SK-N-SH (cell line): ENCODE measurements at regions of chr12 and their contacts with region 1.

Region 1: DNA sequence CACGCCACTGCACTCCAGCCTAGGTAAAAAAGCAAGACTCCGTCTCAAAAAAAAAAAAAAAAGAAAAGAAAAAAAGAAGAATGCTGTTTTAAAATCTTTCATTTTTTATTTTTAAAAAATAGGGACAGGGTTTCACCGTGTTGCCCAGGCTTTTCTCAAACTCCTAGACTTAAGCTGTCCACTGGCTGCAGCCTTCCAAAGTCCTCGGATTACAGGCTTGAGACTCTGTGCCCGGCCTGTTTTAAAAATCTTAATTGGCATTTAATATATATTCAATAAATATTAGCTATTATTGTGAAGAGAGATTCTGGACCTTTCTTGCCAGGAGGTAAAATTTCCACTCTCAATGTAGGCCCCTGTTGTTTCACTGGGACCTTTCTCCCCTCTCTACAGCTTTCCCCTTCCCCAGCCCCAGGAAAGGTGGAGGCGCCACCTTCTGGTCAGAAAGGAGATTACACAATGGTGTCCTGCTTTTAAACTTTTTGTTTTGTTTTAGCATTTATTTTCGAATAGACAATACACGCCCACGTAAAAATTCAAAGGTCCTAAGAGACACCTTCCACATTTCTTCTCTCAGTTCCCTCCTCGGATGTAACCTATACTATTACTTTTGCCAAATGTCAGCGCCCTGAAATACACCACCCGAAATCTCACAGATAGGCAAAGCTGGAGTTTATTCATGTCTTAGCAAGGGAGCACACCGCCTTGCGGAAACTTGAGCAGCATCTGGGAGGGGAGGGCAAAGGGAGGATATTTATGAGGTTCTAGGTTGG is 23.8 kb upstream of the PHC1 start:
- DNase-seq: peak; percentile 76
- H3K4me3 ChIP-seq: peak overlapping the region; percentile 50 to 67
- H3K27ac ChIP-seq: no peak overlapping the region
- H3K4me1 ChIP-seq: no peaks in the 10 kb centered on the region
- H3K27me3 ChIP-seq: no peaks in the 10 kb centered on the region
- CTCF ChIP-seq: peak; percentile 93
- EP300 ChIP-seq: no peak
- RAD21 ChIP-seq: peak; percentile 80

Region 2: GRCh38 chr12:7832059-7832696 is 1058.3 kb before region 1 on chr12:
- CTCF ChIA-PET with region 1: no interaction called
- POLR2A ChIA-PET with region 1: no interaction called
- DNase-seq: peak; percentile 49
- H3K4me3 ChIP-seq: no peak overlapping the region
- H3K27ac ChIP-seq: no peak overlapping the region
- H3K4me1 ChIP-seq: no peaks in the 10 kb centered on the region
- H3K27me3 ChIP-seq: peaks cover 45% of the 10 kb centered on the region
- CTCF ChIP-seq: peak; percentile 74
- EP300 ChIP-seq: no peak
- RAD21 ChIP-seq: peak; percentile 28

Region 3: GRCh38 chr12:8662593-8662992 is 227.9 kb before region 1 on chr12 and contains the start of gene MFAP5:
- CTCF ChIA-PET with region 1: interaction called, 22 read pairs
- POLR2A ChIA-PET with region 1: no interaction called
- DNase-seq: no peak
- H3K4me3 ChIP-seq: no peak within 1 kb of the TSS
- H3K27ac ChIP-seq: no peak within 1 kb of the TSS; a peak in 1 of 4 replicates
- H3K4me1 ChIP-seq: no peaks in the 10 kb centered on the region
- H3K27me3 ChIP-seq: no peaks in the 10 kb centered on the region; the same call in 1 of the 2 replicates
- CTCF ChIP-seq: no peak
- EP300 ChIP-seq: no peak
- RAD21 ChIP-seq: no peak
- polyA plus RNA-seq, gene MFAP5: 19.1 and 34.8 TPM in 2 replicates

Region 4: DNA sequence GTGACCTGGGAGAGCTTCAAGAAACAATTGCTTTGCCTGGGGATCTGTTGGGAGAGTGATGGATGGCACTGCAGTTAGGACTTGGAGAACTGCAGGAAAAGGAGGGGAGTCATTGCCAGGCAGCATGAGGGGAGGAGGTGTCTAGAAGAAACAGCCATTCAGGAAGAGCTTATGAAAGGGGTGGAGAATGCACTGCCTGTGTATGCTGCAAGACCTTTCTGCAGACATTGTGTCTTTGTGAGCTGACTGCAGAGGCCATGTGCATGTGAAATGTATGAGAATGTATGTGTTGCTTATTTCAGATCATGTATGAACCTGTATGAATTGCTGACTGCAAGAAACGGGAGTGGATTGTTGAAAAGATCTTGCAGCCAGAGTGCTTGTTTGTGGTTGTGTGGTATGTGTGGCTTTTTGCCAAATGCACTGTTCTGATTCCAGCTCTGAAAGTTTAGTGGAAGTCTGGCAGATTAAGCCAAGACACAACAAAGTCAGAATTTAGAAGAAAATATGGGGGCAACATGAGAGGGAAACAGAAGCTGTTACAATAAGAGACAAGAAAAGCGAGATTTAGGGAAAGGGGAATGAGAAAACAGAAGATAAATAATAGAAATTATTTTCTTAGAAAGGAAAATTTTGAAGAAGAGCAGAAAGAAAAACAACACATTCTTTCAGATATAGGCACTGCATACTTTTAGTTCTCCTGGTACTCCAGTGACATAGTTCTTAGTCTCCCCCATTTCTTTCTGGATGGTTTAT is 202.5 kb before region 1 on chr12:
- CTCF ChIA-PET with region 1: interaction called, 48 read pairs
- POLR2A ChIA-PET with region 1: no interaction called
- DNase-seq: peak; percentile 77
- H3K4me3 ChIP-seq: peak overlapping the region; percentile 15 to 23; a peak in 3 of 4 replicates
- H3K27ac ChIP-seq: peak overlapping the region; percentile 40 to 82; a peak in 3 of 4 replicates
- H3K4me1 ChIP-seq: peaks cover 6 to 14% of the 10 kb centered on the region in 2 experiments; a peak in 3 of 4 replicates
- H3K27me3 ChIP-seq: no peaks in the 10 kb centered on the region
- CTCF ChIP-seq: no peak
- EP300 ChIP-seq: 0 out of 4 replicates have a peak, but pooled peaks of 1 of the 2 experiments have one; percentile 18
- RAD21 ChIP-seq: no peak

Region 5: DNA sequence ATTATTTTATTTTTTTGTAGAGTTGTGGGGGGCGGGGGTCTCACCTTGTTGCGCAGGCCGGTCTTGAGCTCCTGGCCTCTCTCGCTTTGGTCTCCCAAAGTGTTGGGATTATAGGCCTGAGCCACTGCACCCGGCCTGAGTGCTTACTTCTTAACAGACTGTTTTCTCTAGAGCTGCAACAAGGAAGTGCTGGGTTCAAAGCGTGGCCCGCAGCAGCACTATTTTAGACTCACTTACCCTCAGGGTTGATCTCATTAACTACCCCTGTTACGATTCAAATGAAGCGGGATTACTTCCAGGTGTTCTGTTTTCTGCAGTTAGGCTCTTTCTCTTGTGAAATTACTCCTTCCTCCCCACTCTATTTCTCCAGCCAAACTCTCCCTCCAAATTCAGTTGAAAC is 59.4 kb before region 1 on chr12:
- CTCF ChIA-PET with region 1: interaction called, 33 read pairs
- POLR2A ChIA-PET with region 1: no interaction called
- DNase-seq: no peak
- H3K4me3 ChIP-seq: no peak overlapping the region
- H3K27ac ChIP-seq: no peak overlapping the region
- H3K4me1 ChIP-seq: no peaks in the 10 kb centered on the region
- H3K27me3 ChIP-seq: no peaks in the 10 kb centered on the region; the same call in 1 of the 2 replicates
- CTCF ChIP-seq: no peak
- EP300 ChIP-seq: no peak
- RAD21 ChIP-seq: no peak

Region 6: DNA sequence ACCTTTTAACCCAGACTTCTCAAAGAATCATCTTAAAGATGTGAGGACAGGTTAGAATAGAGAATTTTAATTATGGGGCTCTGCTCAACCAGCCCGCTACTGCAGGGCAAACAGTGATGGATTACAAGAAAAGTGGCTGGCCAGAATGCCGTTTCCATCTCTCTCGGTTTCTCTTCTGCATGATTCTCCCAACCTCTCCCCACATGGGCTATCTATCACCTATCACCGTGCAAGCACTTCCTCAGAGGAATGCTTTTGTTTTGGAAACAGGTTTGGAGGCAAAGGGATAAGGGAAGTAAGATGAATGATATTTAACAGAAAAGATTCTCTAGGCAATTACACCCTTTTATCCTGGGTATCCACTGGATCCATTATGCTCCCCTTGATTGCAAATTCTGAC is 13.6 kb before region 1 on chr12:
- CTCF ChIA-PET with region 1: interaction called, 29 read pairs
- POLR2A ChIA-PET with region 1: no interaction called
- DNase-seq: no peak
- H3K4me3 ChIP-seq: no peak overlapping the region
- H3K27ac ChIP-seq: no peak overlapping the region
- H3K4me1 ChIP-seq: no peaks in the 10 kb centered on the region; a peak in 1 of 4 replicates
- H3K27me3 ChIP-seq: no peaks in the 10 kb centered on the region; the same call in 1 of the 2 replicates
- CTCF ChIP-seq: no peak
- EP300 ChIP-seq: no peak
- RAD21 ChIP-seq: no peak

Region 7: GRCh38 chr12:8949342-8950220 is 59.1 kb after region 1 on chr12 and contains the start of gene M6PR:
- CTCF ChIA-PET with region 1: interaction called, 12 read pairs
- POLR2A ChIA-PET with region 1: no interaction called
- DNase-seq: peak; percentile 90
- H3K4me3 ChIP-seq: peak within 1 kb of the TSS; percentile 97 to 99
- H3K27ac ChIP-seq: peak within 1 kb of the TSS; percentile 96 to 99
- H3K4me1 ChIP-seq: peaks cover 0 to 11% of the 10 kb centered on the region in 2 experiments; a peak in 3 of 4 replicates
- H3K27me3 ChIP-seq: no peaks in the 10 kb centered on the region
- CTCF ChIP-seq: peak; percentile 60
- EP300 ChIP-seq: no peak; a peak in 1 of 4 replicates
- RAD21 ChIP-seq: peak; percentile 55
- polyA plus RNA-seq, gene M6PR: 132 and 196 TPM in 2 replicates